ENCODE measurements at regions of chr7 and their contacts with region 1.

Region 1: GRCh38 chr7:153258686-153259085 is 499.1 kb downstream of the ACTR3B start:
- DNase-seq: no peak
- H3K4me3 ChIP-seq: no peak overlapping the region
- H3K27ac ChIP-seq: no peak overlapping the region
- H3K4me1 ChIP-seq: no peaks in the 10 kb centered on the region
- H3K27me3 ChIP-seq: no peaks in the 10 kb centered on the region
- CTCF ChIP-seq: no peak

Region 2: DNA sequence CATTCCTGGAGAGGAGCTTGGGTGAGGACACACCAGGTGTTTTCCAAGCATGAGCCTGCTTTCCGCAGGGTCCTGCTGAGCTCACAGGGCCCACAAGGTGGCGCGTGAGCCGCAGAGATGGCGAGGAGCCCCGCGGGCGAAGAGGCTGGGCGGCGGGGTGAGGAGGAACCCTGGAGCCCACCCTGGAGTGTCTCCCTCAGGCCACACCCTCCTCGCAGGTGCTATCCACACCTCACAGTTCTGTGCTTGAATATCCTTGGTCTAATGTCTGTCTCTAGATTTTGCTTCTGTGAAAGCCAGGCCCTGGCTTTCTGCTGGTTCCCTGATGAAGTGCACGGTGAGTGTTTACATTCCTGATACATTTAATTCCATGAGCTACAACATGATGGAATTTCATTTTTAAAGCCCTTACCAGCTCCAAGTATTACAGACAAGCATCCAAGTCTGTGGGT is 65.5 kb before region 1 on chr7:
- intact Hi-C with region 1: loop called (anchors 10 kb)
- DNase-seq: no peak
- H3K4me3 ChIP-seq: no peak overlapping the region
- H3K27ac ChIP-seq: no peak overlapping the region
- H3K4me1 ChIP-seq: no peaks in the 10 kb centered on the region
- H3K27me3 ChIP-seq: no peaks in the 10 kb centered on the region
- CTCF ChIP-seq: peak in 1 of 3 experiments; percentile 11

Region 3: GRCh38 chr7:154332811-154333580 is 1074.3 kb after region 1 on chr7:
- intact Hi-C with region 1: no loop called
- DNase-seq: no peak
- H3K4me3 ChIP-seq: no peak overlapping the region
- H3K27ac ChIP-seq: no peak overlapping the region
- H3K4me1 ChIP-seq: no peaks in the 10 kb centered on the region
- H3K27me3 ChIP-seq: no peaks in the 10 kb centered on the region
- CTCF ChIP-seq: no peak